ENCODE measurements at regions of chr11 and their contacts with region 1.

Region 1: GRCh38 chr11:85947431-85948272 is 92.5 kb downstream of the CCDC83 start:
- DNase-seq: peak; percentile 59
- H3K4me3 Mint-ChIP-seq: peak overlapping the region; percentile 30
- H3K27ac Mint-ChIP-seq: peak overlapping the region; percentile 78
- H3K4me1 Mint-ChIP-seq: peaks cover 46% of the 10 kb centered on the region
- H3K27me3 Mint-ChIP-seq: no peaks in the 10 kb centered on the region

Region 2: DNA sequence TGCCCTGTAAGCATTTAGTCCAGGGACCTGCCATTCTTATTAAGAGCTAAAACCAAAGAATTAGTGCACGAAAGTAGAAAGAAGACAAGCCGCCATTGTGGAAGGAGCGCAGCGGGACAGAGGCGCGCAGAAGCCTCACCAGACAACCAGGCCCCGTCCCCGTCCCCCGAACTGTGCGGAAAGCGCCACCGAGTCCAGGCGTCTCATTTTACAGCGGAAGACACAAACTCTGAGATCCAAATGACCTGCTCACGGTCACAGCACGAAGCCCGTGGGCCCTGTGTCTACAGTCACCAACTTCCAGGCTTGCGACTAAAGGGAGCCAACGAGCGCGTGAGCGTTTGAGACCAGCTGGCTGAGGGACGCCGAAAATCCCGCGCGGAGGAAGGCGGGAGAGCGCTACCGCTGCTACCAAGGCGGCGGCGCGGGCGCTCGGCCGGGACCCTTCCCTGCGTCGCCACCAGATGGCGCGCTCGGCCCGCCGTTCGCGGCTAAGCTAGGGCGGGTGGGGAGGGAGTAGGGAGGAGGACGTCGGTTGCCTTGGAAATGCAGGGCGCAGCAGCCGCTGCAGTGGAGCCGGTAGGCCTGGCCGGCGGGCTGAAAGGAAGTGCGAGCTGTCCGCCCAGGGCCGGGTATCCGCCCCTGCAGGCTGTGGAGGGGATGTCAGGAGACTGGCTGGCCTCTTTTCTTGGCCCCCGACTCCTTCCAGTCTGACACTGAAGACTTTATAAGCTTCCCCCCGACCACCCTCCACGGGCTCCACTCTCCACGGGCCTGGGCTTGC is 92.9 kb before region 1 on chr11:
- CTCF ChIA-PET with region 1: no interaction called
- POLR2A ChIA-PET with region 1: no interaction called
- intact Hi-C with region 1: loop called (anchors 2 kb)
- DNase-seq: peak; percentile 96
- H3K4me3 Mint-ChIP-seq: peak overlapping the region; percentile 86
- H3K27ac Mint-ChIP-seq: peak overlapping the region; percentile 87
- H3K4me1 Mint-ChIP-seq: peaks cover 10% of the 10 kb centered on the region
- H3K27me3 Mint-ChIP-seq: no peaks in the 10 kb centered on the region

Region 3: GRCh38 chr11:86003654-86004053 is 56.0 kb after region 1 on chr11:
- CTCF ChIA-PET with region 1: no interaction called
- POLR2A ChIA-PET with region 1: no interaction called
- intact Hi-C with region 1: no loop called
- DNase-seq: no peak
- H3K4me3 Mint-ChIP-seq: no peak overlapping the region
- H3K27ac Mint-ChIP-seq: no peak overlapping the region
- H3K4me1 Mint-ChIP-seq: peaks cover 25% of the 10 kb centered on the region
- H3K27me3 Mint-ChIP-seq: no peaks in the 10 kb centered on the region

Region 4: DNA sequence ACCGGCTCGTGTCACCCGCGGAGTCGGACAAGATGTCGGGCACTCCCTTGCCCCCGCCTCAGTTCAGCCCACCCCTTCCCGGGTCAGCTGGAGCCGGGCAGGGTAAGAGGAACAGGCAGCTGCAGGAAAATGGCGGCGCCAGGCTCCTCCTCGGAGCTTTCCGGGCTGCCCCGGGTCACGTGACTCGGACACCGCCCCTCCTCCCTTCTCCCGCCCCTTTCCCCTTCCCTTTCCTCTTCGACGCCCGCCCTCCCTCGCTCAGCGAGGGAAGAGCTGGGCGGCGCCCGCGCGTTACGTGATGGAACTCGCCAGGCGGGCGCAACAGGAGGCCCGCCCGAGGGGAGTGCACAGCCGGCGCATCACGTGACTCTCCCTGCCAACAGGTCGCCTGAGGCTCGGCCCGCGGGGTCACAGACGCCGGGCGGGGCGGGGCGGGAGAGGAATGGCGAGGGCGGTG is 121.3 kb after region 1 on chr11 and contains the start of gene PICALM:
- CTCF ChIA-PET with region 1: no interaction called
- POLR2A ChIA-PET with region 1: no interaction called
- intact Hi-C with region 1: loop called (anchors 2 kb)
- DNase-seq: peak; percentile 99
- H3K4me3 Mint-ChIP-seq: peak within 1 kb of the TSS; percentile 96
- H3K27ac Mint-ChIP-seq: peak within 1 kb of the TSS; percentile 88
- H3K4me1 Mint-ChIP-seq: peaks cover 25% of the 10 kb centered on the region
- H3K27me3 Mint-ChIP-seq: no peaks in the 10 kb centered on the region
- total RNA-seq, gene PICALM: 75.9 to 90.4 TPM

Region 5: DNA sequence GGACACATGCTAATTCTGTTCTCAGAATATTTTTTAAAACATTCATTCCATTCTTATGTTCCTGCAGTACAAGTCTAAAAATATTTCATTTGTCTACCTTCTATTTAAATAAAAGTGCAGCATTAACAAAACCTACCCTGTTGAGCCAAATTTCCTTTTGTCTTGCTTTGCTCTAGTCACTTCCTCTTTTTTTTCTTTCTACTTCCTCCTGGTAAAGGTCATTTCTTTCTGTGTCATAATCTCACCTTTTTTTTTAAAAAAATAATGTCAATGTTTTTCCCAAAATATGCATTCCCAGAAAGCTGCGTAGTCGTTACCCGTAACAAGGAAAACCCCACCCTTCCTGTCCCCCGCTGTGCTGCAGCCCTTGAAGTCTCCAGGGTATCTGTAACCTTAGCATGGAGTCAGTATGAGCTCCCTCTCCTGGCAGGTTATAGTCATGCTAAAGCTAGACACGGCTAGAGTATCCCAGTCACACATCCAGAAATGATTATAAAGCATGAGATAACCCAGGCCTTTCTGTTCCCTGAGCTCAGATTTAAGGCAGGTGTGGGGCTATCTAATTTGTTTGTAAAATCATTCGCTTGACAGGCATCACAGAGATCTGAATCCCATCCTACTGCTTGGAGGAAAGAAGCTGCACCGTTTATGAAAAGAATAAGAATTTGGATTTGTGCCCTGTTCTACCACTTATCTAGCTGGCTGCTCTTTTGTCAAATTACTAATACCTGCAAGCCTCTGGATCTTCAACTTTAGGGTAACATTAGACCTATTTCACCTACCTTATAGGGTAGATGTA is 245.8 kb after region 1 on chr11:
- CTCF ChIA-PET with region 1: interaction called, 6 read pairs
- POLR2A ChIA-PET with region 1: no interaction called
- intact Hi-C with region 1: loop called (anchors 1 kb)
- DNase-seq: peak; percentile 72
- H3K4me3 Mint-ChIP-seq: peak overlapping the region; percentile 60
- H3K27ac Mint-ChIP-seq: peak overlapping the region; percentile 64
- H3K4me1 Mint-ChIP-seq: peaks cover 33% of the 10 kb centered on the region
- H3K27me3 Mint-ChIP-seq: peaks cover 6% of the 10 kb centered on the region

Region 6: GRCh38 chr11:86244522-86245368 is 297.1 kb after region 1 on chr11 and contains the start of gene EED:
- CTCF ChIA-PET with region 1: interaction called, 3 read pairs
- POLR2A ChIA-PET with region 1: no interaction called
- intact Hi-C with region 1: loop called (anchors 2 kb)
- DNase-seq: peak; percentile 96
- H3K4me3 Mint-ChIP-seq: no peak within 1 kb of the TSS
- H3K27ac Mint-ChIP-seq: no peak within 1 kb of the TSS
- H3K4me1 Mint-ChIP-seq: peaks cover 33% of the 10 kb centered on the region
- H3K27me3 Mint-ChIP-seq: no peaks in the 10 kb centered on the region
- total RNA-seq, gene EED: 170 TPM

Region 7: DNA sequence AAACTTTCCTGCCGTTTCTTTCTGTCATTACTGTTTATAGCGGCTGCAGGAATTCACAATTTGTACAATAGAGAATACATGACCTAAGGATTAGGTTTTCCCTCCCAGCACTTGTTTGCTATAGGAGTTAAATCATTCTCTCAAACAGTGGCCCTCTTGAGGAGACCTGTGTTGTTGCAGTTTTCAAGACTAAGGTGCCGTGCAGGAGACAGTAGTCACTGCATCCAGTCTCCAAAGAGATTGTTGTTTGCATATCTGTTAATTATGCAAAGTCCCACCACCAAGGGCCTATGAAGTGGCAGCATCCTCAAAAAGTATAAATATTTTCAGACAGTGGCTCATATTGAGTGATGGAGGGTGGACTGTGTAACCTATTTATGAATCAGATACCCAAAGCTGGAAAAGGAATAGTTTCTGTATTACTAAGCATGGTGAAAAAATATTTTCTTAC is 855.0 kb after region 1 on chr11:
- CTCF ChIA-PET with region 1: no interaction called
- POLR2A ChIA-PET with region 1: no interaction called
- intact Hi-C with region 1: loop called (anchors 1 kb)
- DNase-seq: peak; percentile 27
- H3K4me3 Mint-ChIP-seq: no peak overlapping the region
- H3K27ac Mint-ChIP-seq: no peak overlapping the region
- H3K4me1 Mint-ChIP-seq: peaks cover 57% of the 10 kb centered on the region
- H3K27me3 Mint-ChIP-seq: peaks cover 51% of the 10 kb centered on the region

Measured in activated CD4-positive, alpha-beta memory T cell treated with anti-CD3 and anti-CD28 coated beads for 36 hours (primary cell).